ENCODE measurements at regions of chr2 and their contacts with region 1.

Region 1: DNA sequence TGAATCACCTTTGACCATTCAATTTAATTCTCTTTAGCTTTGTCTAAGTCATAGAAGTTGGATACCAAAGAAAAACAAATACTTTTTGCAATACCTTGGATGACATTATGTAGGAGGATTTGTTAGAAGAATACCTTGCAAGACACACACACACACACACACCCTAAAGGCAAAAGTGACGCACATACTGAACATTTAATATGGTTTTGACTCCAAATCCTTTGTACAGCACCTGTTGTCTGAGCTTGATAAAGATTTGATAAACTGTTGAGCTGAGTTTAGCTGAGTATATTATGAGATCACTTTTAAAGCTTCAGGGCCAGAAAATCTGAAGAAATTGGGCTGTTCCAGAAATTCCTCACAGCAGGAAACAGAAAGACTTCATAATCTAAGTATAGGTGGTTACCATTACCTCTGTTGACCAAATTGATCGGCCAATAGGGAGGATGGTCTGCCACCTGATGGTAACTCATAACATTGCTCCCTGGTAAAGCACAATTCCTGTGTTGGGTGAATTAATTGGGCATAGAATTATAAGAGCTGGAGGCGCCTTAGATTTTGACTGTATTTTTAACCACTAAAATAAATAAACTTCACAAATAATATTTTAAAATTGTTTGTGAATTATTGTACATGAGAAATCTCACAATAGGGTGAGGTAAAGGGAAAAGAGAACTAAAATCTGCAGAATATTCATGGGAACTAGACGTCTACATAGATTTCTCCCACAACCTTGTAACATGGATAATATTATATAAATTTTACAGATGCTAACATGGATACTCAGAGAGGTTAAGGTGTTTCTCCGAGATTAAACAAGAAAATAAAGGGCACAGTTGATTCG is 21.9 kb upstream of the RPIA start:
- DNase-seq: peak; percentile 29
- ATAC-seq: peak; percentile 80
- H3K4me3 Mint-ChIP-seq: no peak overlapping the region
- H3K27ac Mint-ChIP-seq: no peak overlapping the region
- H3K4me1 Mint-ChIP-seq: no peaks in the 10 kb centered on the region
- H3K27me3 Mint-ChIP-seq: no peaks in the 10 kb centered on the region; the same call in 1 of the 2 replicates
- CTCF ChIP-seq: no peak; the same call in 1 of the 2 replicates

Region 2: DNA sequence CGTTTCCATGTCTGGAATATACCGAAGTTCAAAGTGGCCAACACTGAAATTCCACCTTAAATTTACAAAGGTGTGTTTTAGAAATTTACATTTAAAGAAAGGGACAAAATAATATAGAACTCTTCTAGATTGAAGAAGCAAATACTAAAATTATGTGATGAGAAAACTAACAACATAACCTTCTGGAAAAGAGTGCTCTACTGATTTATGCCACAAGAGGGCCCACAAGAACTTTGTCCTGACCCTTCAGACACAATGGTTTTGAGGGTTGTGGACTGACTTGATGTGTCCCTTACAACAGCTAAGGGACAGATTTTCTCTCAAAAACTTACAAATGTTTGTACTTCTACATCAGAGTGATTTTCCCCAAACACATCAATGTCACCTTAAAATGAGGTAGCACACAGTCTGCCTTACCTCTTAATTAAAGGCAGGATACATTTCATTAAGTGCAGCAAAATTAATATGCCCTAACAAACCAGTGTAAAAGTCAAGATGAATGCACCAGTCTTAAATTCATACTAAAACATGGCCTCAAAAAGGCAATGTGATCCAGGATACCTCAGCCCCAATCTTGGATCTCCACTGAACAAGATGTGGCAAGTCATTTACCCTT is 78.5 kb before region 1 on chr2:
- CTCF ChIA-PET with region 1: interaction called, 36 read pairs
- POLR2A ChIA-PET with region 1: no interaction called
- DNase-seq: peak; percentile 21
- ATAC-seq: peak; percentile 66
- H3K4me3 Mint-ChIP-seq: no peak overlapping the region
- H3K27ac Mint-ChIP-seq: 0 out of 2 replicates have a peak overlapping the region, but pooled peaks have one; percentile 23
- H3K4me1 Mint-ChIP-seq: no peaks in the 10 kb centered on the region
- H3K27me3 Mint-ChIP-seq: no peaks in the 10 kb centered on the region
- CTCF ChIP-seq: no peak; the same call in none of the 2 replicates

Region 3: GRCh38 chr2:88600038-88600465 is 69.5 kb before region 1 on chr2:
- CTCF ChIA-PET with region 1: interaction called, 14 read pairs
- POLR2A ChIA-PET with region 1: no interaction called
- DNase-seq: no peak
- ATAC-seq: peak; percentile 75
- H3K4me3 Mint-ChIP-seq: no peak overlapping the region
- H3K27ac Mint-ChIP-seq: peak overlapping the region; percentile 74
- H3K4me1 Mint-ChIP-seq: peaks cover 38% of the 10 kb centered on the region
- H3K27me3 Mint-ChIP-seq: no peaks in the 10 kb centered on the region
- CTCF ChIP-seq: no peak

Region 4: DNA sequence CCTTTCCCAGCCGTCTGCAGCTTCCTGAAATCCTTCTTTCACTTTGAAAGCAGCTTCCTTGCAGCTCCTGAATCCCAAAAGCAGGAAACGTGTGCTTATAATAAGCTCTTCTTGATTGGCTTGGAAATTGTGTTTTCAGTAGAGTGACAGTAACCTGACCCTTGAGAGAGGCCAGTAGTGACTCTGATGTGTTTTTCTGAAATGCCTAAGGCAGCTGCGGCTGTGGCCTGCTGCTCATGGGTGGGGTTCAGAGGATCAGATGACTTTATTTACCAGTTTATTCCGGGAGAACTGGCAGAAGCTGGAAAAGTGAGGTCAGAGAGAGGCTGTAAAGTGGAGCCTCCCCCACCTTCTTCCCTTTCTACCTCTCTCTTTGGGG is 10.1 kb before region 1 on chr2:
- CTCF ChIA-PET with region 1: interaction called, 30 read pairs
- POLR2A ChIA-PET with region 1: no interaction called
- DNase-seq: no peak
- ATAC-seq: peak; percentile 78
- H3K4me3 Mint-ChIP-seq: peak overlapping the region; percentile 9; the same call in 1 of the 2 replicates
- H3K27ac Mint-ChIP-seq: peak overlapping the region; percentile 98
- H3K4me1 Mint-ChIP-seq: peaks cover 21% of the 10 kb centered on the region
- H3K27me3 Mint-ChIP-seq: no peaks in the 10 kb centered on the region
- CTCF ChIP-seq: no peak

Region 5: GRCh38 chr2:88691339-88692183 is 22.0 kb after region 1 on chr2 and contains the start of gene RPIA:
- CTCF ChIA-PET with region 1: interaction called, 11 read pairs
- POLR2A ChIA-PET with region 1: no interaction called
- DNase-seq: peak; percentile 99
- ATAC-seq: peak; percentile 98
- H3K4me3 Mint-ChIP-seq: peak within 1 kb of the TSS; percentile 93
- H3K27ac Mint-ChIP-seq: peak within 1 kb of the TSS; percentile 96
- H3K4me1 Mint-ChIP-seq: peaks cover 30% of the 10 kb centered on the region
- H3K27me3 Mint-ChIP-seq: peaks cover 20% of the 10 kb centered on the region
- CTCF ChIP-seq: 0 out of 2 replicates have a peak, but pooled peaks have one; percentile 20
- total RNA-seq, gene RPIA: 21.8 to 23.4 TPM (median 23.4 TPM) in 3 replicates